Dorsolateral prefrontal cortex (tissue), 120 donors: ENCODE measurements at regions of chr5 and their contacts with region 1.

Region 1: GRCh38 chr5:15794052-15794985 is 294.3 kb downstream of the FBXL7 start:
- DNase-seq: no peak
- H3K4me3 ChIP-seq: peak overlapping the region in 47 of 59 donors; percentile 1 to 52 (median 28)
- H3K27ac ChIP-seq: peak overlapping the region; percentile 66 to 99 (median 92)
- H3K27me3 ChIP-seq: no peaks in the 10 kb centered on the region
- CTCF ChIP-seq: peak; percentile 25 to 80 (median 63)

Region 2: GRCh38 chr5:15383469-15383868 is 410.9 kb before region 1 on chr5:
- intact Hi-C with region 1: loop called in 1 of 2 experiments (anchors 10 kb)
- DNase-seq: no peak
- H3K4me3 ChIP-seq: no peak overlapping the region
- H3K27ac ChIP-seq: no peak overlapping the region
- H3K27me3 ChIP-seq: peaks cover 0 to 5% (median 0%) of the 10 kb centered on the region in 45 donors
- CTCF ChIP-seq: peak in 48 of 56 donors; percentile 7 to 58 (median 40)

Region 3: DNA sequence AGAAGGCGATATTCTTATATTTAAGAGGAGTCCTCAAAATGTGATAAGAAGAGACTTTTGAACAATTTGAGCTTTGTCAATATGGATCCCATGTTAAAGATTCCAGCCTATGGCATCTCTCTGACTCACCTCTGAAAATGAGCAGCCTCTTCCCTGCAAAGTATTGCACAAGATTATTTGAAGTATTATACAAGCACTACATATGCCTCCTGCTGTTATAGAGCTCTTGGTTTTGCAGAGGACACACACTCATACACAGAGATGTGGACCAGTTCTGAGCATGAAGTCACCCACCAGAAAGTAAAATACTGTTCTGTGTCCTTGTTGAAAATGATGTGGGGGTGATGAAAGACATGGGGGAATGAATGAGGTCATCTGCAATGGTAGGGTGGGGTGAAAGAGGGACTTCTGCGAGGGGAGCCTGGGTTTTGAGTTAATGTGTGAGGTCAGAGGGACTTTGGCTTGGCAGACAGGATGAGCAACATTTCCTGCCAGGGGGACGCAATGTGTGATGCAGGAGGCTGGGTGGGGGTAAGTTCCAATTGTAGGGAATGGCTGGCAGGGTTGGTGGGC is 268.5 kb before region 1 on chr5:
- intact Hi-C with region 1: loop called in 1 of 2 experiments (anchors 5 kb)
- DNase-seq: no peak
- H3K4me3 ChIP-seq: peak overlapping the region in 3 of 59 donors; percentile 0 to 5 (median 4)
- H3K27ac ChIP-seq: peak overlapping the region in 29 of 59 donors; percentile 7 to 80 (median 44)
- H3K27me3 ChIP-seq: no peaks in the 10 kb centered on the region
- CTCF ChIP-seq: no peak

Region 4: GRCh38 chr5:15645381-15646160 is 148.7 kb before region 1 on chr5:
- intact Hi-C with region 1: no loop called
- DNase-seq: no peak
- H3K4me3 ChIP-seq: no peak overlapping the region
- H3K27ac ChIP-seq: no peak overlapping the region
- H3K27me3 ChIP-seq: no peaks in the 10 kb centered on the region
- CTCF ChIP-seq: no peak

Region 5: GRCh38 chr5:15821506-15821905 is 27.2 kb after region 1 on chr5:
- intact Hi-C with region 1: loop called in 1 of 2 experiments (anchors 2 kb)
- DNase-seq: no peak
- H3K4me3 ChIP-seq: no peak overlapping the region
- H3K27ac ChIP-seq: no peak overlapping the region
- H3K27me3 ChIP-seq: no peaks in the 10 kb centered on the region
- CTCF ChIP-seq: no peak

Region 6: GRCh38 chr5:15834596-15835245 is 40.4 kb after region 1 on chr5:
- intact Hi-C with region 1: no loop called
- DNase-seq: no peak
- H3K4me3 ChIP-seq: no peak overlapping the region
- H3K27ac ChIP-seq: no peak overlapping the region
- H3K27me3 ChIP-seq: no peaks in the 10 kb centered on the region
- CTCF ChIP-seq: no peak

Region 7: DNA sequence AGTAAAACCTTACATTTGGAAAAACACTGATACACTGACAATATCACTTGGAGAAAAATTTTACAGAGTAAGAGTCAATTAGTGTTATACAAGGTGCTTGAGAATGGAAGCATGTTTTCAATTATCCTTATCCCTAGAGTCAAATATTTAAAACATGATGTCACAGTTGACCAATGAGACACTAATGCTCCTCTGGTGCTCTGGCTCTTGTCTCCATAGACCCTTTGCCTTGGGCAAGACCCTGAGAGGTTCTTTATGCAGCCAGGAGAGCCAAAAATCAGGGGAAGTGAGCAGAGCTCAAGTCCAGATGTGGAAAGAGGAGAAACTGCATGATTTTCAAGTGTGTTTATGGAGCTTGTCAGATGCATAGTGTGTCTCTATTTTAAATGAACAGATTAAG is 231.4 kb after region 1 on chr5:
- intact Hi-C with region 1: no loop called
- DNase-seq: no peak
- H3K4me3 ChIP-seq: no peak overlapping the region
- H3K27ac ChIP-seq: no peak overlapping the region
- H3K27me3 ChIP-seq: no peaks in the 10 kb centered on the region
- CTCF ChIP-seq: no peak